AG04449 (cell line): ENCODE measurements at regions of chr2 and their contacts with region 1.

Region 1: DNA sequence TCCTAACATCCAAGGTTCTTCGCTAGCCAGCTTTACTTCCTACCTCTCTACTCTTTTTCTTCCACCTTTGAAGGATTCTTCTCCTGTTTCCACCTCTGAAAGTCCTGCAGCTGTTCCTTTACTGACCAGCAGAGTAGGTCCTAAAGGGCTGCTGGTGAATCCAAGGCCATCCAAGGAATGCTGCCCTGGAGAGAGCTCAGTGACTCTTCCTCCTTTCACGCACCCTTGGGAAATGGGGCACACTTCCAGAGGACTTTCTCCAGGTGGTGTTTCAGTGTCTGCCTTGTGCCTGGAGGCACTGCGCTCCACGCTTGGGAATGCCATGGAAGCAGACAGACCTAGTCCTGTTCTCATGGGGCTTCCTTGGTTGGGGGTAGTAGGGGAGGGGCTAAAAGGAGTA is 45.4 kb downstream of the SLC16A14 start:
- DNase-seq: no peak
- H3K4me3 ChIP-seq: no peak overlapping the region
- CTCF ChIP-seq: no peak

Region 2: GRCh38 chr2:230007931-230008707 is 15.2 kb before region 1 on chr2:
- CTCF ChIA-PET with region 1: interaction called, 10 read pairs
- POLR2A ChIA-PET with region 1: no interaction called
- DNase-seq: no peak
- H3K4me3 ChIP-seq: no peak overlapping the region
- CTCF ChIP-seq: peak; percentile 67

Region 3: GRCh38 chr2:230124757-230125431 is 101.6 kb after region 1 on chr2:
- CTCF ChIA-PET with region 1: no interaction called
- POLR2A ChIA-PET with region 1: no interaction called
- DNase-seq: no peak
- H3K4me3 ChIP-seq: no peak overlapping the region
- CTCF ChIP-seq: no peak

Region 4: DNA sequence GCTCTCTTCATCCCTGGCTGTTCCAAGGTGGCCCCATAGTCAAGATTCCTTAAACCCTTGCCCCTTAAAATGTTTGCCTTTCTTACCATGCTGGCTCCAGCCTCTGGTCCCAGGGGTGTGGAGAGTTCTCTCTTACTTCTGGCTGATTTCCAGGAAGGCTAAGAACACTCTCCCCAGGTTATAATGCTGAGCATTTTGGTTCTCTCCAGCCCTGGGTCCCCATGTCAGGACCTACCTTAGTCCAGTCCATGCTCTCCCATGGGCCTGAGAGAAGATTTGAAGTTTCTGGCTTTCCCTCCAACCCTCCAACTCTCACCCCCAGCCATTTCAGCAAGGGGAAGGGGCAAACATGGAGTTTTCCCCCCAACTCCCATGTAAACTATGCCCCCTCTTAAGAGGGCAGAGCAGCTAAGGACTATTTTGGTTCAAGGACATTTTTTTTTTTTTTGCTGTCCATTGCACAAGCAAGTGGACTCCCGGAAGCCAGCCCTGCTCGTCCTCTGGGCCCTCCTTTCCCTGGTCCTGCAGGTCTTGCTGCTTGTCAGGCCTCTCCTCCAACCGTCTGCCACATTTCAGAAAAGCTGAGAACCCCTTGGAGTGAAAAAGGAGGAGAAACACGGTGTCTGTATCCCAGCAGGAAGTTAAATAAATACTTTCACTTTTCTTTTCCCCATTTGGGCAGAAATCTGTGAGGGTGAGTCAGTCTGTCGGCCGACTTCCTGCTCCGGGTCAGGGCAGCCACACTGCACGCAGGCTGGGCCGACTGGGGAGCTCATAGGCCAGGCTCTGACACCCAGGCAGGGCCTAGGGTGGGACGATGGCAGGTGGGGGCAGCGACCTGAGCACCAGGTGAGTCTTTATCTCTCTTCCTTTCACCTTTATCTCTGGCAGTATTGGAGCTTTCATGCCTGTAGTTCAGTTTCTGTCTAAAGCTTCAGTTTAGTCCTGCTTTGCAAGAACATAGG is 303.4 kb after region 1 on chr2 and contains the start of gene SP140L:
- CTCF ChIA-PET with region 1: no interaction called
- POLR2A ChIA-PET with region 1: no interaction called
- DNase-seq: peak; percentile 29
- H3K4me3 ChIP-seq: peak within 1 kb of the TSS; percentile 67
- CTCF ChIP-seq: no peak